Stomach (tissue), 19 donors: ENCODE measurements at regions of chr11 and their contacts with region 1.

Region 1: GRCh38 chr11:74449369-74449931 is 17.9 kb downstream of the KCNE3 start:
- DNase-seq: peak; percentile 29 to 92
- H3K4me3 ChIP-seq: no peak overlapping the region
- H3K27ac ChIP-seq: no peak overlapping the region
- H3K4me1 ChIP-seq: peaks cover 0 to 10% (median 3%) of the 10 kb centered on the region in 4 donors
- H3K27me3 ChIP-seq: peaks cover 0 to 10% (median 0%) of the 10 kb centered on the region in 3 donors
- CTCF ChIP-seq: peak in 6 of 7 experiments; percentile 3 to 75 (median 55)
- EP300 ChIP-seq: no peak
- POLR2A ChIP-seq: no peak

Region 2: GRCh38 chr11:74255741-74256369 is 193.6 kb before region 1 on chr11:
- intact Hi-C with region 1: loop called (anchors 5 kb)
- DNase-seq: peak; percentile 57 to 86
- H3K4me3 ChIP-seq: no peak overlapping the region
- H3K27ac ChIP-seq: no peak overlapping the region
- H3K4me1 ChIP-seq: peaks cover 0 to 16% (median 11%) of the 10 kb centered on the region in 4 donors
- H3K27me3 ChIP-seq: no peaks in the 10 kb centered on the region
- CTCF ChIP-seq: peak in 5 of 7 experiments; percentile 72 to 93 (median 87)
- EP300 ChIP-seq: no peak
- POLR2A ChIP-seq: no peak

Region 3: GRCh38 chr11:74390697-74391096 is 58.8 kb before region 1 on chr11:
- intact Hi-C with region 1: loop called (anchors 5 kb)
- DNase-seq: no peak
- H3K4me3 ChIP-seq: no peak overlapping the region
- H3K27ac ChIP-seq: no peak overlapping the region
- H3K4me1 ChIP-seq: peaks cover 0 to 5% (median 4%) of the 10 kb centered on the region in 4 donors
- H3K27me3 ChIP-seq: no peaks in the 10 kb centered on the region
- CTCF ChIP-seq: no peak
- EP300 ChIP-seq: no peak
- POLR2A ChIP-seq: no peak